Dendritic cell treated with granulocyte-macrophage colony-stimulating factor and Interleukin-4, amounts not matched to agents 40 ng/mL and 50 ng/mL, for 4 days (primary cell): ENCODE measurements at regions of chr5 and their contacts with region 1.

Region 1: DNA sequence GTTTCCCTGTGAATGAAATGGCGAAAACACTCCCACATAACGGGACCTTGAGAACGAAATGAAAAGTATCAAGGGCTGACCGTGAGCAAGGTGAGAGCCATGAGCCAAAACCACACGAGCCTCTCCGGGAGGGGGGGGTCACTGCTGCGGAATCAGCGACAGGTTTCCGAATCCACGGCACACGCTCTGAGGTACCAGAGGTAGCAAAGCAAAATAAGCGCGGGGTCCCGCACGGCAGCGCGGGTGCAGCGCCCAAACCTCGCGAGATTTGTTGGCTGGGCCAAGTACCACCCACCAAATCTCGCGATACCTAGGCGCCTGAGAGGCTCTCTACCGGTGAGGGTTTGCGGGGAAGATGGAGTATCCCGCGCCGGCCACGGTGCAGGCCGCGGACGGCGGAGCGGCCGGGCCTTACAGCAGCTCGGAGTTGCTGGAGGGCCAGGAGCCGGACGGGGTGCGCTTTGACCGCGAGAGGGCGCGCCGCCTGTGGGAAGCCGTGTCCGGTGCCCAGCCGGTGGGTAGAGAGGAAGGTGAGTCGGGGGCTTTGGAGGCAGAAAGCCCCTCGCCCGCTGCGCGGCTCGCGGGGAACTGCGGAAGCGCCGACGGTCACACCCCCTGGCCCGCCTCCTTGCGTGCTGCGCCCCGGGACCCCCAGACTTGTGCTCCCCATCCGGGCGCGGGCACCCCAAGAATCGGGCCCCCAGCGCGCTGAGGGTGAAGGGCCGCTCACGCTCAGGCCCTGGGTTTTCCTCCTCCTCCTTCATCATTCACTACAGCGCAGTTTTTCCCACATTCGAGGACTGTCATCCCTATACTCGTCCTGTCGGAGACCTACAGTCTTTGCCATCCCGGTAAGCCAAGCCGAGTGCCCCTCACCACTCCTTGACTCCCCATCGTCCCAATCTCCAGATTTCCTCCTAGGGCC is at the start of gene ZNF346:
- H3K4me3 Mint-ChIP-seq: peak within 1 kb of the TSS; percentile 84
- H3K27ac Mint-ChIP-seq: peak within 1 kb of the TSS; percentile 71
- H3K4me1 Mint-ChIP-seq: peaks cover 33% of the 10 kb centered on the region
- H3K27me3 Mint-ChIP-seq: no peaks in the 10 kb centered on the region

Region 2: GRCh38 chr5:177006265-177006972 is 16.2 kb before region 1 on chr5 and contains the start of gene UIMC1:
- intact Hi-C with region 1: loop called (anchors 1 kb)
- H3K4me3 Mint-ChIP-seq: peak within 1 kb of the TSS; percentile 96
- H3K27ac Mint-ChIP-seq: peak within 1 kb of the TSS; percentile 99
- H3K4me1 Mint-ChIP-seq: peaks cover 7% of the 10 kb centered on the region
- H3K27me3 Mint-ChIP-seq: no peaks in the 10 kb centered on the region

Region 3: DNA sequence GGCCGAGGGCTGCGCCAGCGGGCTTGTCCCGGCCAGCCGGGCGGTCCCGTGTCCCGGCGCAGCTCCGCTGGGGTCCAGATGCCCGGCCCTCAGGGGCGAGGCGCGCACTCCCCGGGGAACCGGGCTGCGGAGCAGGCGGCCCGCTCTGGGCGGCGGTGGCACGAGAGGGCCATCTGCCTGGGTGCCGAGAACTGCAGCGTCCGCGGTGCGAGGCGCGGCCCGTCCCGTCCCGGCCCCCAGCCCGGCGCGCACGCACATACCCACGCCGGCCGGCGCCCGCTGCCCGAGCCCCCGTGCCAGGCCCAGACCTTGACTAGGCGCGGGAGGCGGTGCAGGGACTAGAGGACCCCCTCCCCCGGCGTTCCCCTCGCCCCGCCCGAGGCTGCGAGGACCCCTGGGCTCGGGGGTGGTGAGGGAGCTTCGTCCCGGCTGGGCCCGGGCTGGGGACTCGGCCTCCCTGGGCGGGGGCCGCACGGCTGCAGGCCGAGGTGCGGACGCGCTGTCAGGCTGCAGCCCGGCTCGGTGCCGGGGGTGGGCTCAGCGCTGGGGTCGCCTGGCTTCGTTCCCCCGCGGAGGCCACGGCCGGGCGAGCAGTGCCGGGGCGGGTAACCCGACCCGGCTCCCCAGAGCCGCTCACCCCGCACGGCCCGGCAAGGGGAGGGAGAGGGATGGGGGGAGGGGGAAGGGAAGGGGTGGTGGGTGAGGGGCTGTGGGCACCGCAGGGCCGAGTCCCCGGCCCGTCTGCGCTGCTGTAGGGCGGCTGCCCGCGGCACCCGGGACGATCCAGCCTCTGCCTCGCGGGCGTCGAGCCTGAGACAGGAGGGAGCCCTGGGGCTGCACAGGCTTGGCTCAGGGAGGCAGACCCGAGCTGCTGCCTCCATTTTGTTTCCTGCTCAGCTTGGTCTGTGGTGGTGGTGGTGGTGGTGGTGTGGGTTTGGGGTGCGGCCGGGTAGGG is 109.8 kb after region 1 on chr5:
- intact Hi-C with region 1: no loop called
- H3K4me3 Mint-ChIP-seq: peak overlapping the region; percentile 67
- H3K27ac Mint-ChIP-seq: peak overlapping the region; percentile 92
- H3K4me1 Mint-ChIP-seq: peaks cover 54% of the 10 kb centered on the region
- H3K27me3 Mint-ChIP-seq: peaks cover 5% of the 10 kb centered on the region